ENCODE measurements at regions of chr1 and their contacts with region 1.

Region 1: DNA sequence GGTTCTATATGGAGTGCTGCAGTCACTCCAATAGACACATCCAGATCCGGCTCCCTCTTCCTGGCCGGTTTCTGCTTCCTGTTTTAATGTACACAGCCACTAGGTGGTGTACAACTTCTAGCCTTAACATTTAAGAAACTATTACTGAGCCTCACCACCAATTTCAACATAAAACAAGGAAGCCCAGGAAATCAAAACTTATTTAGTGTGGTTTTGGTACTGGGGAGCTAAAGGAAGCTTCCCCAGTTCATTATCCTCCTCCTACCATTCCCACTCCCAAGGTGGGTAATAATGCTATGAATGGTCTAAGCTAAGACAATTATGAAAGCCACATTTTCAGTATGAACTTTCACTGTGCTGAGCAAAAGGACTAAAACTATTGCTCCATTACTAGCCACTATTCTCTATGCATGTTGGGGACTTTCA is 25.5 kb upstream of the MTMR11 start:
- DNase-seq: peak; percentile 81
- H3K4me3 ChIP-seq: no peak overlapping the region
- H3K27ac ChIP-seq: peak overlapping the region; percentile 40
- H3K4me1 ChIP-seq: no peaks in the 10 kb centered on the region
- H3K27me3 ChIP-seq: no peaks in the 10 kb centered on the region
- CTCF ChIP-seq: peak; percentile 84

Region 2: DNA sequence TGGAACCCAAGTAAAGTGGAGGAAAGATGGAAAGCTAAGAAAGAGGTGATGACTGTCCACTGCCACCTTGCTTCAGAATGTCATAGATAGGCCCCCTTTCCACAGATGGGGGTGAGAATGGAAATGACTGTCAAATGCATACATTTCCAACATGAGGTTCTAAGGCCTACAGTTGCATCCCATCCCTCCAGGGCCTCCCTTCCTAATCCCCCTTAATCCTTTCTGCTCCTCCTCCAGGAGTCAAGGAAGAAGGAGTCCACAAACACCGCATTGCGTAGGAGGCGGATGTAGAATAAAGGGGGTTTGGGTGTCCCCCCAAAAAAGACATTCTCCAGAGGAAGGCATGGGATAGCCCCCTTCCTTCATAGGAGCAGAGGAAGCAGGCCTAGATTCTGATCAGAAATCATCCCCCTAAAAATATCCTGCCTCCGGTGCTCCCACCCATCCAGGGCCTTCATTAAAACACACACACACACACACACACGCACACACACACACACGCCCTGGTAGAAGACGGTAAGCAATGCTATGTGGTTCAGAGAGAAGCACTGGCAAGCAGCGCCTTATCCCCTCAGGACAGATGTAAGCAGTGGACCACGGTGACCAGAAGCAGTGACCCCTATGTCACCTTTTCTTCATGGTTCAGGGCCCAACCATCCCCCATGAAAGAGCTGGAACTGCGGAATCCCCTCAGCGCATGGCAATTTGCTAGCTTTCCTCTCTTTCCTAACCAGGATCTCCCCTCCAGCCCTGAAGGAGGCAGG is 46.5 kb before region 1 on chr1:
- CTCF ChIA-PET with region 1: no interaction called
- POLR2A ChIA-PET with region 1: no interaction called
- intact Hi-C with region 1: no loop called
- DNase-seq: no peak
- H3K4me3 ChIP-seq: peak overlapping the region; percentile 72
- H3K27ac ChIP-seq: peak overlapping the region; percentile 46
- H3K4me1 ChIP-seq: peaks cover 19% of the 10 kb centered on the region
- H3K27me3 ChIP-seq: no peaks in the 10 kb centered on the region
- CTCF ChIP-seq: no peak

Region 3: DNA sequence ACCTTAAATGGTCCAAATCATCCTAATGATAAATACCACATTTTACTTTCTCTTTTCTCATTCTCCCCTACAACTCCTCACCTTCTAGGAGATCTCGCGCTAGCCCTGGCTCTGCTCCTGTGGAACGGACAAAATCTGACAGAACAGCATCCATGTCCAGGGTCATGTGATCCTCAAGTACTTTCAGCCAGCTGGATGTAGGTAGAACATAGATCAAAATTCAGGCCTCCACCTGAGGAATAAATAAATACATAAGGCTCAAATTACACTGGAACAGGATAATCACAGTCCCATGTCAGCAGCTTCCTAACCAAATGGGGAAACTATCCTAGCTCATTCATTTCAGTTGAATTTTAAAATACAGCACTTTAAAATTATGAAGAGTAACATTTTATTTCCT is 15.2 kb after region 1 on chr1:
- CTCF ChIA-PET with region 1: interaction called, 3 read pairs
- POLR2A ChIA-PET with region 1: no interaction called
- intact Hi-C with region 1: loop called (anchors 2 kb)
- DNase-seq: no peak
- H3K4me3 ChIP-seq: no peak overlapping the region
- H3K27ac ChIP-seq: no peak overlapping the region
- H3K4me1 ChIP-seq: no peaks in the 10 kb centered on the region
- H3K27me3 ChIP-seq: no peaks in the 10 kb centered on the region
- CTCF ChIP-seq: no peak

Region 4: DNA sequence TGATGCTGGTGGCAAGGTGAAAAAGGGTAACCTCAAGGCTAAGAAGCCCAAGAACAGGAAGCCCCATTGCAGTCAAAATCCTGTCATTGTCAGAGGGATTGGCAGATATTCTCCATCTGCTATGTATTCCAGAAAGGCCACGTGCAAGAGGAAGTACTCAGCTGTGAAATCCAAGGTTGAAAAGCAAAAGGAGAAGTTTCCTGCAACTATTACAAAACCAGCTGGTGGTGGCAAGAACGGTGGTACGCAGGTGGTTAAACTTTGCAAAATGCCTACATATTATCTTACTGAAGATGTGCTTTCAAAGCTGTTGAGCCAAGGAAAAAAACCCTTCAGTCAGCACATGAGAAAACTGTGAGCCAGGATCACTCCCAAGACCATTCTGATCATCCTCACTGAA is 91.8 kb after region 1 on chr1:
- CTCF ChIA-PET with region 1: no interaction called
- POLR2A ChIA-PET with region 1: no interaction called
- intact Hi-C with region 1: loop called (anchors 2 kb)
- DNase-seq: no peak
- H3K4me3 ChIP-seq: no peak overlapping the region
- H3K27ac ChIP-seq: no peak overlapping the region
- H3K4me1 ChIP-seq: no peaks in the 10 kb centered on the region
- H3K27me3 ChIP-seq: no peaks in the 10 kb centered on the region
- CTCF ChIP-seq: no peak

Region 5: DNA sequence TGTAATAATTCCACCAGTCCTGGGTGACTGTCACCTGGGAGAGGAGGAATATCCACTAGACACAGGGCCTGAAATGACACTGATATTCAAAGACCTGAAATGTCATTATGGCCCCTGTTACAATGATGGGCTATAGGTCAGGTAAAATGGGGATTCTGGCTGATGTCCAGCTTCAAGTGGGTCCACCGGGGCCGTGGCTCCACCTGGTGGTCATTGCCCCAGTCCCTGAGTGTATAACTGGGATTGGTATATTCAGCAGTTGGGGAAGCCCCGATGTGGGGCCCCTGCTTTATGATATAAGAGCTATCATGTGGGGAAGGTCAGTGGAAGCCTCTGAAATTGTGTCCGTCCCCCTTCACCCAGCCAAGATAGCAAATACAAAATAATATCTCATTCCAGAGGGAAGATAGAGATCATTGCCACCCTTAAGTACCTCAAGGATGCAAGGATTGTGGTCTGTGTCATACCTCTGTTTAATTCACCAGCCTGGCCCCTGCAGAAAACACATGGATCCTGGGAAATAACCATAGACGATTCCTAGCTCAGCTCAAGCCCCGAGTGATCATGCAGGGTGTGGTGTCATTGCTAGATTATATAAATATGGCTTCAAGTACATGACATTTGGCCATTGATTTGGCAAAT is 206.9 kb after region 1 on chr1:
- CTCF ChIA-PET with region 1: interaction called, 3 read pairs
- POLR2A ChIA-PET with region 1: no interaction called
- intact Hi-C with region 1: loop called (anchors 1 kb)
- DNase-seq: peak; percentile 61
- H3K4me3 ChIP-seq: no peak overlapping the region
- H3K27ac ChIP-seq: no peak overlapping the region
- H3K4me1 ChIP-seq: no peaks in the 10 kb centered on the region
- H3K27me3 ChIP-seq: no peaks in the 10 kb centered on the region
- CTCF ChIP-seq: peak; percentile 79

Region 6: GRCh38 chr1:150186789-150187559 is 224.8 kb after region 1 on chr1:
- CTCF ChIA-PET with region 1: interaction called, 10 read pairs
- POLR2A ChIA-PET with region 1: no interaction called
- intact Hi-C with region 1: no loop called
- DNase-seq: peak; percentile 79
- H3K4me3 ChIP-seq: no peak overlapping the region
- H3K27ac ChIP-seq: no peak overlapping the region
- H3K4me1 ChIP-seq: peaks cover 12% of the 10 kb centered on the region
- H3K27me3 ChIP-seq: no peaks in the 10 kb centered on the region
- CTCF ChIP-seq: peak; percentile 71